ENCODE measurements at regions of chr17 and their contacts with region 1.

Region 1: DNA sequence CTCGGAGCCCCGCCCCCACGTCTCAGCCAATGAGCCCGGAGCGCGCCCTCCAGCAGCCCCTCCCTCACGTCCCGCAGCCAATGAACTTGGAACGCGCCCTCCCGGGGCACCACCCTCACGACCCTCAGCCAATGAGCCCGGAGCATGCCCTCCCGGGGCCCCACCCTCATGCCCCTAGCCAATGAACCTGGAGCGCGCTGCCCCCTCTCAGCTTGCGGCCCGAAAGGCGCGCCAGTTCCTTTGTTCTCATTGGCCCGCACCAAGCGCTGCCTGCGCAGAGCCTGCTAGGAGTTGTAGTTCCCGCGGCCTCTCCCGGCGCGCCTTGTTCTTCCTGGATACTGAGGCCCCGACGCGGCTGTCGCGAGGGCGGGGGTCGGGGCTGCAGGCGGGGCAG is at the start of gene LRRC45:
- DNase-seq: peak; percentile 99
- ATAC-seq: peak; percentile 76
- H3K4me3 ChIP-seq: peak within 1 kb of the TSS; percentile 80 to 90 (median 90)
- H3K27ac ChIP-seq: peak within 1 kb of the TSS; percentile 78
- H3K4me1 ChIP-seq: peaks cover 69% of the 10 kb centered on the region
- H3K27me3 ChIP-seq: no peaks in the 10 kb centered on the region; a peak in 1 of 5 replicates
- CTCF ChIP-seq: peak; percentile 9; the same call in 1 of the 2 replicates
- EP300 ChIP-seq: no peak
- POLR2A ChIP-seq: no peak
- RAD21 ChIP-seq: no peak
- total RNA-seq, gene LRRC45: 21.4 and 48.1 TPM in 2 replicates

Region 2: DNA sequence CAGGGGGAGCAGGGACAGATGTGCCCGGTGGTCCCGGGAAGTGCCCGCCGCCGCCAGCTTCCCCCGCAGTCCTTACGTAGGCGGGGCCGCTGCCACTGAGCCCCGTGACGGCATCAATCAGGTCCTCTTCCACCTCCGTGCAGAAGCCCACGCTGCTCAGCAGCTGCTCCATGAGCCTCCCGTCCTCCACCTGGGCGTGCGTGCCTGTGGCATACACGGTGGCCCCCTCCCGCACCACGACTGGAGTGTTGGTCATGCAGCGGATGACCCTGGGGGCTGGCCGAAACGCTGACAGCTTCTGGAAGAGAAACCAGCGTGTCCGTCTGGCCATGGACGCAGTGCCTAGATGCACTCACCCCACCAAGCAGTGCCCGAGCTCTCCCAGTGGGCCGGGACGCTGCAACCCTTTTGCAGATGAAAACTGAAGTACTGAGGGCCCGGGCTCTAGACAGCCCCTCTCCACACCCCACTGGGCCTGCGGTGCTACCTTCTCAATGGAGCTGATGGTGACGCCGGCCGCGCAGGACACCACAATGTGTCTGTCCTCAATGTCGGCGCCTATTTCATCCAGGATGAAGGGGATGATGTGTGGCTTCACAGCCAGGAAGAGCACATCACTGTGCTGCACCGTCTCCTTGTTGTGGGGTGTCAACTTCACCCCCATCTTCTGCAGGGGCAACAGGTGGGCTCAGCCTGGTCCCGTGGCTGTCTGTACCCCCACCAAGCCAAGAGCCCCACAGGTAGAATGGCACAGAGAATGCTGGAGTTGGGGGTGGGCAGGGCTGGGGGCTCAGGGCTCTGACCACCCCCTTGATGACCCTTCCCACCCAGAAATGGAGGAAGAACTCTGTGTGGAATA is 87.9 kb before region 1 on chr17:
- CTCF ChIA-PET with region 1: no interaction called
- POLR2A ChIA-PET with region 1: interaction called, 11 read pairs
- in situ Hi-C with region 1: no loop called
- intact Hi-C with region 1: no loop called
- DNase-seq: no peak
- ATAC-seq: no peak
- H3K4me3 ChIP-seq: peak overlapping the region in 1 of 3 experiments; percentile 88; a peak in 2 of 6 replicates
- H3K27ac ChIP-seq: no peak overlapping the region
- H3K4me1 ChIP-seq: peaks cover 58% of the 10 kb centered on the region
- H3K27me3 ChIP-seq: peaks cover 9 to 21% of the 10 kb centered on the region in 2 experiments; a peak in 4 of 5 replicates
- CTCF ChIP-seq: no peak
- EP300 ChIP-seq: no peak
- POLR2A ChIP-seq: no peak
- RAD21 ChIP-seq: no peak

Region 3: GRCh38 chr17:81967533-81968395 is 55.2 kb before region 1 on chr17:
- CTCF ChIA-PET with region 1: interaction called, 5 read pairs
- POLR2A ChIA-PET with region 1: interaction called, 120 read pairs
- in situ Hi-C with region 1: no loop called
- intact Hi-C with region 1: no loop called
- DNase-seq: peak; percentile 98
- ATAC-seq: peak; percentile 79
- H3K4me3 ChIP-seq: peak overlapping the region; percentile 44 to 74 (median 48)
- H3K27ac ChIP-seq: peak overlapping the region; percentile 75
- H3K4me1 ChIP-seq: peaks cover 70% of the 10 kb centered on the region
- H3K27me3 ChIP-seq: no peaks in the 10 kb centered on the region
- CTCF ChIP-seq: peak; percentile 49
- EP300 ChIP-seq: peak in 1 of 2 experiments; percentile 90; a peak in 3 of 4 replicates
- POLR2A ChIP-seq: peak in 1 of 2 experiments; percentile 41; a peak in 1 of 4 replicates
- RAD21 ChIP-seq: 0 out of 2 replicates have a peak, but pooled peaks have one; percentile 14

Region 4: GRCh38 chr17:82037113-82037888 is 14.3 kb after region 1 on chr17 and contains the start of gene DCXR:
- CTCF ChIA-PET with region 1: no interaction called
- POLR2A ChIA-PET with region 1: interaction called, 112 read pairs
- in situ Hi-C with region 1: no loop called
- intact Hi-C with region 1: loop called (anchors 1 kb)
- DNase-seq: peak; percentile 97
- ATAC-seq: peak; percentile 89
- H3K4me3 ChIP-seq: peak within 1 kb of the TSS; percentile 87 to 98 (median 93)
- H3K27ac ChIP-seq: peak within 1 kb of the TSS; percentile 91
- H3K4me1 ChIP-seq: peaks cover 57% of the 10 kb centered on the region
- H3K27me3 ChIP-seq: no peaks in the 10 kb centered on the region
- CTCF ChIP-seq: peak; percentile 92
- EP300 ChIP-seq: peak in 1 of 2 experiments; percentile 56; a peak in 1 of 4 replicates
- POLR2A ChIP-seq: peak; percentile 84 to 99
- RAD21 ChIP-seq: peak; percentile 92
- total RNA-seq, gene DCXR: 286 and 311 TPM in 2 replicates

Region 5: DNA sequence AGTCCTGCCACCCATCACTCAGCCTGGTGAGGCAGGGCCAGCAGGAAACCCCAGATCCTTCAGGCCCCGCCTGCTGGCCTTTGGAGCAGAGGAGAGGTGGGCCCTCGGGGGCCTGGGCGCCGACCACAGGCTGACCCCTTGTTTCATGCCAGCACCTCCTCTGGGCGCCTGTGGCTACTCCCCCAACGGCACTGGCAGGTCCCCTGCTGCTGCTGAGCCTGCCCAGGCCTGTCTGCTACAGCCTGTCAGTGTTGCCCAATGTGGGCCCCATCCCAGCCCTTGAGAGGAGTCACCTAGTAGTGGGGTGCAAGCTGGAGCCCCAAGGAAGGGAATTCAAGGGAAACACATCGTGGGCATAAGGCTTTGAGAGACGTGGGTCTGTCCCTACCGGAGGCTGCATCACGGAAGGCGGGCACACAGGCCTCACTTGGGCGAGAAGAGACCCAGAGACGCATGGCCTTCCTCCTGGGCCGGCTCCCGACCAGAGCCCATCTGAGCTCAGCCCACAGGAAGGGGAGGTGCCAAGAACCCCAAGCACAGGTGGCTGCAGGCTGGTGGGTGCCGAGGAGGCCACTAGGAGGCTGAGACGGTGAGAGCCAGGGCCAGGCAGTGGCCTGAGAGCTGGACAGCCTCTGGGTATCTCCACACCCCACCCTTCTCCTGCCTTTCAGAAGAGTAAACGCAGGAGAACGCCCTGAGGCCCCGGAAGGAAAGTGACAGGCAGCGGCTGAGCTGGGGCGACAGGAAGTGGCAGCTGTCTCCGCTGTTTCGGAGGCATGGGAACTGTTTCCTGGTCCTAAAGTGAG is 83.1 kb after region 1 on chr17:
- CTCF ChIA-PET with region 1: no interaction called
- POLR2A ChIA-PET with region 1: interaction called, 61 read pairs
- in situ Hi-C with region 1: no loop called
- intact Hi-C with region 1: no loop called
- DNase-seq: peak; percentile 94
- ATAC-seq: peak; percentile 80
- H3K4me3 ChIP-seq: peak overlapping the region; percentile 56 to 82 (median 57)
- H3K27ac ChIP-seq: peak overlapping the region; percentile 72
- H3K4me1 ChIP-seq: peaks cover 79% of the 10 kb centered on the region
- H3K27me3 ChIP-seq: no peaks in the 10 kb centered on the region
- CTCF ChIP-seq: peak; percentile 92
- EP300 ChIP-seq: peak in 1 of 2 experiments; percentile 50; a peak in 1 of 4 replicates
- POLR2A ChIP-seq: peak in 1 of 2 experiments; percentile 94; a peak in 2 of 4 replicates
- RAD21 ChIP-seq: peak; percentile 80

Region 6: DNA sequence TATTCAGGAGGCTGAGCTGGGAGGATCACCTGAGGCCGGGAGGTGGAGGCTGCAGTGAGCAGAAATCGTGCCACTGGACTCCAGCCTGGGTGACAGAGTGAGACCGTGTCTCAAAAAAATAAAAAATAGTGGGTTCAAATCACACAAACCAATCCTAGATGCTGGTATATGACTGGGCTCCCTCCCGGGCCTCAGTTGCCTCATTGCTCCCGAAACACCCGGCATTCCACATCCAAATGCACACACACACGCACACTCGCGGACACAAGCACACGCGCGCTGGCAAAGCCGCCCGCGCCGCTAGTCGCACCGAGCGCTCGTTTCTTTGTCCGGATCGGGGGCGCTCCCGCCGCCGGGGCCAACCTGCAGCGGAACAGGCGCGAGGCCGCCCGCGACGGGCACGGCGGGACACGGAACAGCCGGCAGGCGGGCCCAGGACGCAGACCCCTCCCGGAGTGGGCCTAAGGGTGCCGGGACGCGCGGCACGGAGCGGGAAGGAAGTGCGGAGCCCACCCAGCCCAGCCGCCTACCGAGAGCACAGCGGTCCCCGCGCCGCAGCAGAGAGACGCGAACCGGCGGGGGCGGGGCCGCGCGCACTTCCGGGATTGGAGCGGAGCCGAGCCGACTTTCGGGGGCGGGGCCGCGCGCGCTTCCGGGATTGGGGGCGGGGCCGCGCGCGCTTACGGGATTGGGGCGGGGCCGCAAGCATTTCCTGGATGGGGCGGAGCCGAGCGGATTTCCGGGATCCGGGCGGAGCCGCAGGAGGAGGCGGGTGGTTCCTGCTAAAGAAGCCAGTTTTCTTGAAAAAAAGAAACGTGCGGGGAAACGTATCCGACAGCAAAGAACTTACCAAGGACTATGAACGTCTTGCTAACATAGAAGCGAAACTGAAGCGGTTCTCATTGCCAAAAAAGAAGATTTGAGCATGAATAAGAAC is 427.5 kb after region 1 on chr17 and contains the start of gene CYBC1:
- CTCF ChIA-PET with region 1: no interaction called
- POLR2A ChIA-PET with region 1: no interaction called
- in situ Hi-C with region 1: no loop called
- intact Hi-C with region 1: no loop called
- DNase-seq: peak; percentile 84
- ATAC-seq: peak; percentile 89
- H3K4me3 ChIP-seq: peak within 1 kb of the TSS; percentile 73 to 98 (median 82)
- H3K27ac ChIP-seq: peak within 1 kb of the TSS; percentile 66
- H3K4me1 ChIP-seq: peaks cover 33% of the 10 kb centered on the region
- H3K27me3 ChIP-seq: no peaks in the 10 kb centered on the region
- CTCF ChIP-seq: no peak; the same call in 1 of the 2 replicates
- EP300 ChIP-seq: no peak
- POLR2A ChIP-seq: peak; percentile 78 to 93
- RAD21 ChIP-seq: peak; percentile 55; the same call in 1 of the 2 replicates
- total RNA-seq, gene CYBC1: 27.1 and 43.4 TPM in 2 replicates

Measured in HepG2 (cell line).